Dorsolateral prefrontal cortex (tissue), 120 donors: ENCODE measurements at regions of chr9 and their contacts with region 1.

Region 1: DNA sequence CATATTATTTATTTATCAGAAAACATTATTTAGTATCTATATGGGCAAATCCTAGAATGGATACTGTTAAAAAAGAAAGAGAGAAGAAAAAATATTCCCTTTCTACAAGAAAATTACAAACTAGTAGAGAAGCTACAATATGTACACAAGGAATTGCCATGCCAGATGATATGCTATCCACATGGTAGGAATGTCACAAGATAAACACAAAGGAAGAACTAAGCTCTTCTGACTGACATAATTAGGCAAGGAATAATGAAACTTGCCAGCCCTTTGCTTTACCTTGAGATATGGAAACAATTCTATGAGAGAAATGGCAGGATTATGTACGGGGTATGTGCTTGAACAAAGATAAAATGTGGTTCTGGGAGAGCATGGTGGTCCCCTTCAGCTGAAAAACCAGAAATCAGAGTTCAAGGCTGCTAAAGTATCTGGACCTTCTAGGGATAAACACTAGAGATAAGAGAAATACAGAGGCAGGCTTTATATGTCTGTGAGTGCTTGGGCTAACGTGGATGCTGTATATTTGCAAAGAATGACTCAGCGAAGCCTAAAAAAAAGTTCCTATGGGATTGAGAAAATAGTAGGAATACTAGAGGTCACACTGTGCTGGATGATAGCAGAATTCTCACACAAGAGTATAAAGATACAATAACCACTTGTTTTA is 451.6 kb downstream of the TLE1 start:
- DNase-seq: no peak
- H3K4me3 ChIP-seq: no peak overlapping the region
- H3K27ac ChIP-seq: no peak overlapping the region
- H3K27me3 ChIP-seq: no peaks in the 10 kb centered on the region
- CTCF ChIP-seq: no peak

Region 2: GRCh38 chr9:81292056-81292735 is 54.5 kb after region 1 on chr9:
- intact Hi-C with region 1: loop called in 1 of 2 experiments (anchors 10 kb)
- DNase-seq: no peak
- H3K4me3 ChIP-seq: no peak overlapping the region
- H3K27ac ChIP-seq: no peak overlapping the region
- H3K27me3 ChIP-seq: peaks cover 0 to 3% (median 0%) of the 10 kb centered on the region in 45 donors
- CTCF ChIP-seq: no peak